Posterior vena cava (tissue), 2 donors: ENCODE measurements at regions of chrX and their contacts with region 1.

Region 1: GRCh38 chrX:142327182-142327581 is 122.1 kb upstream of the MAGEC2 start:
- DNase-seq: no peak

Region 2: DNA sequence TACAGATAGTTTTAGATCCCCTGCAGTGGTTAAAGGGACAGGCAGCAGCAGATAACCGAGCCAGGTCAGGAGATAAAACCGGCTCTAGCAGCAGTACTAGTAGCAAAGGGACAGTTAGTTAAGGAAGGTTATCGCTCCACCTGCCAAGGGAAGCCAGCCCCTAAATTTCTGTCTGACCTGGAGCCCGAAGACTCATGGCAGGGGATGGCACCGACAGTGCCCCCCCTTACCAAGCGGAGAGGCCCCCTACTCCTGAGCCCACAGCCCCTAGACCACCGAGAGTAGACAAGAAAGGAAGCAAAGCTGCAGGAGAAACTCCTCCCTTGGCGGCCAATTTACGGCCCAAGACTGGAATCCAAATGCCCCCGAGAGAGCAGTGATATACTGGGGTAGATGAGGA is 60.8 kb before region 1 on chrX:
- intact Hi-C with region 1: loop called in 1 of 2 experiments (anchors 2 kb)
- DNase-seq: no peak